Sigmoid colon (tissue), 7 donors: ENCODE measurements at regions of chr2 and their contacts with region 1.

Region 1: GRCh38 chr2:74080346-74080745 is 67.4 kb downstream of the BOLA3 start:
- DNase-seq: no peak
- H3K4me3 ChIP-seq: peak overlapping the region in 3 of 4 donors; percentile 7 to 26 (median 20)
- H3K27ac ChIP-seq: peak overlapping the region; percentile 5 to 62 (median 45)
- H3K4me1 ChIP-seq: peaks cover 0 to 15% (median 4%) of the 10 kb centered on the region in 4 donors
- H3K27me3 ChIP-seq: no peaks in the 10 kb centered on the region
- CTCF ChIP-seq: peak in 1 of 4 experiments; percentile 47
- EP300 ChIP-seq: no peak
- POLR2A ChIP-seq: no peak

Region 2: DNA sequence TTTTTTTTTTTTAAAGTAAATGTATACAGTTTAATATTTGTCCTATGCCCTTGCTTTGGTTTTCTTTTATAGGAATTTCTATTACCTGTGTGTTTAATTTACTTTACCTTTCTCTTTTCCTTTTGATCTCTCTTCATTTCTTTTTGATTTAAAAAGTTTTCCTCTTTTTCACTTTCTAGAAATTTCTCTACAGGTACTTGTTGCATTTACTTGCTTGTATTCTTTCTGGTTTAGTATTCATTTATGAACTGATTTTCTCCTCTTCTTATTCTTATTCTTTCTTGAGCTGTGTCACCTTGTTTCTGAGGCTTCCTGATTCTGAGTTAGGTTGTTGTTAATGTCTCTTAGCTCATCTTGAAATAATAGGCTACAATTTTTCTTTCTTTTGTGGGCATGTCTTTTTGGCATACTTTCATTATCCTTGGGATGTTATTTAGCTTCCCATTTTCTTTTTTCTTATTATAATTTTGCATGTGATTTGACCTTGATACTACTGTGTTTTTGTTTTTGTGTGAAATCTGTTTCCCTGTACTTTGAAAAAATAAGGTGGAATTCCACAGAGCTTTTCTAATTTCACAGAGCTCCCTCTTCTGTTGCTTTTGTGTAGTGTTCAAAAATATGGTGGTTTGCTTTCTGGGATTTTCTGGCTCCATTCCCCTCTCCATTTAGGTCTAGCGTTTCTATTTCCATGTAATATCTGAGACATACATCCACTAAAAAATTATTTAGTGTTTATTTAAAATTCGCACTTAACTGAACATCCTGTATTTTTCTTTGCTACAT is 720.2 kb before region 1 on chr2:
- intact Hi-C with region 1: no loop called
- DNase-seq: no peak
- H3K4me3 ChIP-seq: no peak overlapping the region
- H3K27ac ChIP-seq: no peak overlapping the region
- H3K4me1 ChIP-seq: no peaks in the 10 kb centered on the region
- H3K27me3 ChIP-seq: no peaks in the 10 kb centered on the region
- CTCF ChIP-seq: peak in 1 of 4 experiments; percentile 11
- EP300 ChIP-seq: no peak
- POLR2A ChIP-seq: no peak

Region 3: GRCh38 chr2:73939419-73939818 is 140.9 kb before region 1 on chr2:
- intact Hi-C with region 1: loop called (anchors 10 kb)
- DNase-seq: no peak
- H3K4me3 ChIP-seq: no peak overlapping the region
- H3K27ac ChIP-seq: no peak overlapping the region
- H3K4me1 ChIP-seq: peaks cover 0 to 7% (median 4%) of the 10 kb centered on the region in 4 donors
- H3K27me3 ChIP-seq: no peaks in the 10 kb centered on the region
- CTCF ChIP-seq: no peak
- EP300 ChIP-seq: no peak
- POLR2A ChIP-seq: no peak

Region 4: GRCh38 chr2:74002487-74003391 is 77.6 kb before region 1 on chr2:
- intact Hi-C with region 1: loop called (anchors 5 kb)
- DNase-seq: peak; percentile 90
- H3K4me3 ChIP-seq: peak overlapping the region; percentile 43 to 74 (median 56)
- H3K27ac ChIP-seq: peak overlapping the region; percentile 62 to 77 (median 68)
- H3K4me1 ChIP-seq: peaks cover 0 to 63% (median 51%) of the 10 kb centered on the region in 4 donors
- H3K27me3 ChIP-seq: no peaks in the 10 kb centered on the region
- CTCF ChIP-seq: peak in 1 of 4 experiments; percentile 7
- EP300 ChIP-seq: no peak
- POLR2A ChIP-seq: peak in 1 of 2 donors; percentile 22

Region 5: GRCh38 chr2:74036450-74037195 is 43.7 kb before region 1 on chr2:
- intact Hi-C with region 1: no loop called
- DNase-seq: no peak
- H3K4me3 ChIP-seq: no peak overlapping the region
- H3K27ac ChIP-seq: no peak overlapping the region
- H3K4me1 ChIP-seq: peaks cover 0 to 16% (median 12%) of the 10 kb centered on the region in 4 donors
- H3K27me3 ChIP-seq: no peaks in the 10 kb centered on the region
- CTCF ChIP-seq: no peak
- EP300 ChIP-seq: no peak
- POLR2A ChIP-seq: no peak

Region 6: GRCh38 chr2:74138600-74139323 is 58.4 kb after region 1 on chr2:
- intact Hi-C with region 1: no loop called
- DNase-seq: no peak
- H3K4me3 ChIP-seq: no peak overlapping the region
- H3K27ac ChIP-seq: no peak overlapping the region
- H3K4me1 ChIP-seq: no peaks in the 10 kb centered on the region
- H3K27me3 ChIP-seq: no peaks in the 10 kb centered on the region
- CTCF ChIP-seq: no peak
- EP300 ChIP-seq: no peak
- POLR2A ChIP-seq: no peak